ENCODE measurements at regions of chr5 and their contacts with region 1.

Region 1: GRCh38 chr5:173984218-173984617 is 4.8 kb upstream of the C5orf47 start:
- DNase-seq: no peak
- ATAC-seq: peak; percentile 75 to 87 (median 78)
- H3K4me3 ChIP-seq: no peak overlapping the region
- H3K27ac ChIP-seq: no peak overlapping the region
- H3K4me1 ChIP-seq: no peaks in the 10 kb centered on the region
- H3K27me3 ChIP-seq: no peaks in the 10 kb centered on the region
- CTCF ChIP-seq: peak; percentile 40 to 64 (median 51)
- POLR2A ChIP-seq: no peak

Region 2: DNA sequence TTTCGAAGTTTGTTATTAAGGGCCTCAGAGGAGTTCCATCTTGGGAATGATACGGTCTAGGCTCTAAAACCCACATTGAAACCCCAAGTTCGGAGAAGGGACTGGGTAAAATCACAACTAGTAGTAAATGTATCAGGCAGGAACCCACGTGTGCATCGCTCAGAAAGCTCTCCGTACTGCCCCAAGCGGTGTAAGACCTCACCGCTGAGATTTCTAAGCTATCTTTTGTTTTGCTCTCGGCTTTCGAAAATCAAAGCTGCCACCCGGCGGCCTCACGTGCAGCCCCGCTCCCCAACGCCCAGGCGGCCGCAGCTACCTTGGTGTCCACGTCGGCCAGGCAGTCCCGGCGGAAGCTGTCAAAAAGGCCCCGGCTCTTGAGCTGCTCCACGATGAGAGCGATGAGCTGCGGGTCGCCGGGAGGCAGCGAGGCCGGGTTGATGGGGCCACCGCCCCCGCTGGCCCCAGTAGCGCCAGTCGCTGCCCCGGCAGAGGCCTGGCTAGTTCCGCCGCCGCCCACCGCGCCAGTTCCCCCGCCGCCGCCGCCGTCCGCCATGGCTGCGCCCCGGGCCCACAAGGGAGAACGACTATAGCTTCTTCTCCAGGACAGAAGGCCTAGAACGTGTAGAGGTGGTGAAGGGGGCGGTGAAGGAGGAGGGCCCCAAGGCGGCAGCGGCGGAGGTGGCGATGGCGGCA is 368.2 kb before region 1 on chr5:
- intact Hi-C with region 1: loop called in 1 of 2 experiments (anchors 5 kb)
- DNase-seq: peak in 2 of 3 donors; percentile 61 to 62
- ATAC-seq: peak; percentile 49 to 70 (median 60)
- H3K4me3 ChIP-seq: peak overlapping the region; percentile 87 to 96 (median 94)
- H3K27ac ChIP-seq: peak overlapping the region; percentile 85 to 89 (median 86)
- H3K4me1 ChIP-seq: peaks cover 0 to 24% (median 12%) of the 10 kb centered on the region in 4 donors
- H3K27me3 ChIP-seq: no peaks in the 10 kb centered on the region
- CTCF ChIP-seq: peak; percentile 51 to 65 (median 58)
- POLR2A ChIP-seq: peak; percentile 26

Region 3: DNA sequence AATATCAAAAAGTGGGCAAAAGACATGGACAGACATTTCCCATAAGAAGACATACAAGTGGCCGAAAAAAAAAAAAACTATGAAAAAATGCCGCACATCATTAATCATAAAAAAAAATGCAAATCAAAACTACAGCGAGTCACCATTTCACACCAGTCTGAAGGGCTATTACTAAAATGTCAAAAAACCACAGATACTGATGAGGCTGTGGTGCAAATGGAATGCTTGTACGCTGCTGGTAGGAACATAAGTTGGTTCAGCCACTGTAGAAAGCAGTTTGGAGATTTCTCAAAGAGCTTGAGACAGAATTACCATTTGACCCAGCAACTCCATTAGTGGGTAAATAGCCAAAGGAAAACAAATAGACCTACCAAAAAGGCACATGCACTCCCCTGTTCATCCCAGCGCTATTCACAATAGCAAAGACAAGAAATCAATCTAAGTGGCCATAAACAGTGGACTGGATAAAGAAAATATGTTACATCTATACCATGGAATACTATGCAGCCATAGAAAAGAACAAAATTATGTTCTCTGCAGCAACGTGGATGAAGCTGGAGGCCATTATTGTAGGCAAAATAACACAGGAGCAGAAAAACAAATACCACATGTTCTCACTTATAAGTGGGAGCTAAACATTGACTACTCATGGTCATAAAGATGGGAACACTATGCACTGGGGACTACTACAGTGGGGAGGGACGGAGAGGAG is 257.2 kb before region 1 on chr5:
- intact Hi-C with region 1: no loop called
- DNase-seq: no peak
- ATAC-seq: no peak
- H3K4me3 ChIP-seq: no peak overlapping the region
- H3K27ac ChIP-seq: no peak overlapping the region
- H3K4me1 ChIP-seq: peaks cover 0 to 10% (median 5%) of the 10 kb centered on the region in 4 donors
- H3K27me3 ChIP-seq: no peaks in the 10 kb centered on the region
- CTCF ChIP-seq: no peak
- POLR2A ChIP-seq: no peak

Region 4: DNA sequence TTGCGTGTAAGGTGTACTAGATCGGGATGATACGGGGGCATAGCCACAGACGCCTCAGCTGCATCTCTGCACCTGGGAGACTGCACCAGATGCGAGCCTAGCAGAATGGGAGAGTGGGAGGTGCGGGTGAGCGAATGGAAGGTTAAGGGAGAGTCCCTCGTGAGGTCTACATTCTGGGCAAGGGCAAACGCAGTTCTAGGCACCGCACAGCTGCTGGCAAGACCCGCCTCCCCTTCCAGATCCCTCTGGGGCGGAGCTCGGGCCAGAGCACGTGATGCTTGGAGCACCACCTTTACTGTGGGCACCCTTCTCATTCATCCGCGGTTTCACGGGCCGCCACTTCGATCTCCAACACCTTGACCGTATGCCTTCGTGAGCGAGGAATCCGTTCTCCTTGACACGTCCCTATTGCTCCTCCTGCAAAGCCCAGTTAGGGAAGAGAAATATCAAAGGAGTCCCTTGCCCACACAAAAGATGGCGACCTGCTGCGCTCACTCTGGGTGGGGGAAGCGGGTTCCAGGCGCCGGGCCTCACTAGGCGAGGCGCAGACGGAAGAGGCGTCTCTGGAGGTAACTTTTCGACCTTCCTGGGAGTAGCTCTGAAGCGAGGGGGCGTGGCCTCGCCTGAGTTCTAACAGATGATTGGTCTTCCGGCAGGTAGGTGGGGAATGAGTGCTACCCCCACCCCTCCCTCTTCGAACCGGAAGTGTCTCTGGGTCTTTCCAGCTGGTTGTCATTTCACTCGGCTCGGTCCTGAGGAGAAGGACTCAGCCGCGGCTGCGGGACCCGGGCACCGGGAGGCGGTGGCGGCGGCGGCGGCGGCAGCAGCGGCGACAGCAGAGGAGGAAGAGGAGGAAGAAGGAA is 96.4 kb before region 1 on chr5 and contains the start of gene CPEB4:
- intact Hi-C with region 1: no loop called
- DNase-seq: peak; percentile 99 to 100 (median 100)
- ATAC-seq: peak; percentile 84 to 94 (median 90)
- H3K4me3 ChIP-seq: peak within 1 kb of the TSS; percentile 70 to 78 (median 72)
- H3K27ac ChIP-seq: peak within 1 kb of the TSS; percentile 94 to 97 (median 95)
- H3K4me1 ChIP-seq: peaks cover 0 to 18% (median 7%) of the 10 kb centered on the region in 4 donors
- H3K27me3 ChIP-seq: no peaks in the 10 kb centered on the region
- CTCF ChIP-seq: no peak
- POLR2A ChIP-seq: peak; percentile 98
- total RNA-seq, gene CPEB4: 27.3 to 49.9 (median 40.0) TPM

Region 5: DNA sequence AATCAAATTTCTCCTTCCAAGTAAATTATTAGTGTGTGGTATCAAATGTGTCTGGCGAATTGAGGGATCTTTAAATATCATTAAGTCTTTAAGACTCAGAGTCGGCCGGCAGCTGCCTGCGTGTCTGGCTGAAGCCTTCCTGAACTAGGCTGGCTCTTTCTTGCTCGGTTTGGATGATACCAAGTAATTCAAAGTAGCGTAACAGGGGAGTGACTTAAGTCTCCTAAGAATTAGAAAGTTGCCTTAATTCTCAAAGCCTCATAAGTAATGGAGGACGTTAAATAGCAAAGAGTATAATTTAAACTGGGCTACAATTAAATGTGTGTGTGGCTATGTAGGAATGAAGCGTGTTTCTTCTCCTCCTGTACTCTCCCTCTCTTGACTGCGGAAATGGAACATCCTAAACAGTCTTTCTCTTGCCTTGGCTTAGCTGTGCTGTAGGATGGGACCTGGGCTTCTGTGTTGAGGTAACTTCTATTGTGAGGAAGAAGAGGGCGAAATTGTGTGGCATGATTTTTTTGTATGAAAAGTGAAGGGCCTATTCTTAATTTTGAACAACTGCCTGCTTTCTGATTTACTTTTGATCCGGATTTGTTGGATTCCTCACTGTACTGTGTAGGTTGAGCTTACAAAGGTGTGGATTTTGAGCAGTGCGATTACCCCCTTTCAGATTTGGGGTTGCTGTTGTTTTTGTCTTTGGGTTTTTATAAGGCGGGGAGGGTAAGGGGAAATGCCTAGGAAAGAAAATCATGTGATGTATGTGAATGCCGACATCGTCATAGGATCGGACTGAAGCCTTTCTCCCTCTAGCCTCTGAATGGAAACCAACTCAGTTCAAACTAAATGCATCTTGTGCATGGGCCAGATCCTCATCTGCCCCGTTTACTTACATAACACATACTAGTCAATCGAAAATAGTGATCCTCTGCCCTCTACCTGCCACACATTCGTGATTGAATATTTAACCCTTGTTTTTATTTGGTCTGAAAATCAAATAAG is 66.1 kb before region 1 on chr5:
- intact Hi-C with region 1: no loop called
- DNase-seq: peak in 1 of 3 donors; percentile 38
- ATAC-seq: peak; percentile 59 to 76 (median 64)
- H3K4me3 ChIP-seq: peak overlapping the region in 1 of 3 donors; percentile 27
- H3K27ac ChIP-seq: peak overlapping the region; percentile 31 to 54 (median 44)
- H3K4me1 ChIP-seq: peaks cover 0 to 49% (median 7%) of the 10 kb centered on the region in 4 donors
- H3K27me3 ChIP-seq: no peaks in the 10 kb centered on the region
- CTCF ChIP-seq: peak in 3 of 4 donors; percentile 11 to 26 (median 22)
- POLR2A ChIP-seq: no peak

Measured in right lobe of liver (tissue), 6 donors.